Aorta (tissue), 5 donors: ENCODE measurements at regions of chr17 and their contacts with region 1.

Region 1: GRCh38 chr17:2592971-2593820 is at the start of gene PAFAH1B1:
- DNase-seq: peak; percentile 94 to 98
- ATAC-seq: peak; percentile 97
- H3K4me3 ChIP-seq: peak within 1 kb of the TSS; percentile 86 to 98
- H3K27ac ChIP-seq: peak within 1 kb of the TSS; percentile 79 to 93
- H3K4me1 ChIP-seq: no peaks in the 10 kb centered on the region
- H3K27me3 ChIP-seq: no peaks in the 10 kb centered on the region
- total RNA-seq, gene PAFAH1B1: 157 to 176 TPM

Region 2: GRCh38 chr17:2442166-2442565 is 151.0 kb before region 1 on chr17:
- intact Hi-C with region 1: no loop called
- DNase-seq: no peak
- ATAC-seq: no peak
- H3K4me3 ChIP-seq: no peak overlapping the region
- H3K27ac ChIP-seq: no peak overlapping the region
- H3K4me1 ChIP-seq: no peaks in the 10 kb centered on the region
- H3K27me3 ChIP-seq: no peaks in the 10 kb centered on the region

Region 3: GRCh38 chr17:2474371-2474770 is 118.8 kb before region 1 on chr17:
- intact Hi-C with region 1: no loop called
- DNase-seq: no peak
- ATAC-seq: no peak
- H3K4me3 ChIP-seq: no peak overlapping the region
- H3K27ac ChIP-seq: no peak overlapping the region
- H3K4me1 ChIP-seq: no peaks in the 10 kb centered on the region
- H3K27me3 ChIP-seq: no peaks in the 10 kb centered on the region

Region 4: GRCh38 chr17:2511462-2512369 is 81.5 kb before region 1 on chr17 and contains the start of gene METTL16:
- intact Hi-C with region 1: loop called (anchors 5 to 10 kb)
- DNase-seq: peak; percentile 99
- ATAC-seq: peak; percentile 100
- H3K4me3 ChIP-seq: peak within 1 kb of the TSS; percentile 94 to 97
- H3K27ac ChIP-seq: peak within 1 kb of the TSS; percentile 36 to 76
- H3K4me1 ChIP-seq: peaks cover 2 to 10% of the 10 kb centered on the region in 2 donors
- H3K27me3 ChIP-seq: no peaks in the 10 kb centered on the region
- total RNA-seq, gene METTL16: 24.6 to 33.3 TPM

Region 5: DNA sequence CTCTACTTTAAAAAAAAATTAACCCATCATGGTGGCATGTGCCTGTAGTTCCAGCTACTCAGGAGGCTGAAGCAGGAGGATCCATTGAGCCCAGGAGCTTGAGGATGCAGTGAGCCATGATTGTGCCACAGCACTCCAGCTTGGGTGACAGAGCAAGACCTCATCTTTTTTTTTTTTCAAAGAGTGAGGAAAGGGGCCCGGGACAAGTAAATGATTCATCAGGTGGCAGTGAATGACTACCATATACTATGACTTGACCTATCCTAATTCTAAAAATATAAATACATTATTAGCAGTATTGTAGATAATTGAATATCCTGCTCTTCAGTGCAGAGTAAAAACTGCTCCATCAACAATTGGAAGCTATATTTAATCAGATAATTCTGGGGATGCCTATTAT is 63.1 kb after region 1 on chr17:
- intact Hi-C with region 1: loop called in 1 of 2 experiments (anchors 10 kb)
- DNase-seq: no peak
- ATAC-seq: no peak
- H3K4me3 ChIP-seq: no peak overlapping the region
- H3K27ac ChIP-seq: no peak overlapping the region
- H3K4me1 ChIP-seq: no peaks in the 10 kb centered on the region
- H3K27me3 ChIP-seq: no peaks in the 10 kb centered on the region

Region 6: DNA sequence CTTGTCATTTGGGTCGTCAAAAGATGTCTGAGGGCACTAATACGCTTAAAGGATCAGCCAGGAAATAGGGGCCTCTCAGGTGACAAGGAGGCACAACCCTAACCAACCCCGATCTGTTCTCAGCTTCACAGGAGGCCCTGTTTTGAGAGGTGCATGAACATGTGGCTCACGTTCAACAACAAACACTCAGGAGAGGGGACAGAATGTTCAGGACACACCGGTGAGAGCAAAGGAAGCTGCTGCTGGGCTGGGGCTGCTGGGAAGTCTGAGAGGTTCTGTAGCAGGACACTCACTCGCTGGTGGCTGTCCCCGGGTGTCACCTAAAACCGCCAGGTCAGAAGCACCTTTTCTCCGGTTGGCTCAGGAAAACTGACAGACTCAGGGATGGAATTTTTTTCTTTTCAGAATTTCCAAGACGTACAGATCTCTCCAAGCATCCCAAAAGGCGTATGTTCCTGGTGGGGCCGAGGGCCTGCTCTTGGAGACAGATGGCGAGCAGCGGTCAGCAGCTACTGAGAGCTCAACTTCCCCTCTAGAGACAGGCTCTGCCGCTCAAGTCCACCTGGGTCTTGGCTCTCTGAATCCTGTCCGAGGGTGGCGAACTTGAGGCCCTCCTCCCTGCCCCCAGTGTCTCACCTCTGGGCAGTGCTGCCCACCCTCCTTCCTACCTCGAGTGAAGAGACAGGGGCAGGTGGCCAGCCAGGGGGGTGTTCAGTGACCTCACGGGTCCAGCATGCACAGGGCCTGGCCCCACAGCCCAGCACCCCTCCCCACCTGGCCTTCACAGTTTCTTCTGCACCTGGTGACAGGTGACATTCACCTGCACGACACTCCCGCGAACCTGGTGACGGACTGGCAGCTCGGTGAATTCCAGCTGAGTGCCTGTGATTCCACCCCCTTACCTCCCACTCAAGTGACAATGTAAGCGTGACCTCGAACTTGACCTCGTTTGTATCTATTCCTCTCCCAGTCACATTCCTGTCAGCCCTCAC is 95.5 kb after region 1 on chr17:
- intact Hi-C with region 1: loop called in 1 of 2 experiments (anchors 10 kb)
- DNase-seq: peak in 1 of 2 donors; percentile 45
- ATAC-seq: no peak
- H3K4me3 ChIP-seq: no peak overlapping the region
- H3K27ac ChIP-seq: no peak overlapping the region
- H3K4me1 ChIP-seq: no peaks in the 10 kb centered on the region
- H3K27me3 ChIP-seq: no peaks in the 10 kb centered on the region